WTC11 (cell line): ENCODE measurements at regions of chr9 and their contacts with region 1.

Region 1: GRCh38 chr9:97615439-97616072 is 17.6 kb downstream of the TSTD2 start:
- DNase-seq: peak; percentile 64
- ATAC-seq: peak; percentile 51; the same call in 1 of the 2 replicates
- H3K4me3 Mint-ChIP-seq: no peak overlapping the region
- H3K27ac Mint-ChIP-seq: no peak overlapping the region
- H3K4me1 Mint-ChIP-seq: no peaks in the 10 kb centered on the region
- H3K27me3 Mint-ChIP-seq: no peaks in the 10 kb centered on the region
- CTCF ChIP-seq: peak; percentile 63

Region 2: DNA sequence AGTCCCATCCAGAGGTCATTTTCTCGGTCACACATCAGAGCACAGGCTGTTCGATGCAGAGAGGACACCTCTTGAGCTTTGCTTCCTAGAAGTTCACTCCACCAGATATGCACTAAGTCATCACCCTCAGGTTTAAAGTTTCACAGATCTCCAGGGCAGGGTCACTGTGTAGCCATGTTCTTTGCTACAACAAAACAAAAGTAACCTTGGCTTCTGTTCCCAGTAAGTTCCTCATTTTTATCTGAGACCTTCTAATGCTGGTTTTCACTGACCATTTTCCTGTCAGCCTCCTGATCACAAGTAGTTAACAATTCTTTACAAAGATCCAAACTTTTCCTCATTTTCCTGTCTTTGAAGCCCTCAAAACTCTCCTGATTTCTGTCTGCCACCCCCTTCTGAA is 479.1 kb before region 1 on chr9:
- CTCF ChIA-PET with region 1: no interaction called
- POLR2A ChIA-PET with region 1: no interaction called
- DNase-seq: no peak
- ATAC-seq: no peak
- H3K4me3 Mint-ChIP-seq: no peak overlapping the region
- H3K27ac Mint-ChIP-seq: peak overlapping the region; percentile 54
- H3K4me1 Mint-ChIP-seq: peaks cover 25% of the 10 kb centered on the region
- H3K27me3 Mint-ChIP-seq: no peaks in the 10 kb centered on the region
- CTCF ChIP-seq: no peak

Region 3: GRCh38 chr9:97468658-97469448 is 146.7 kb before region 1 on chr9:
- CTCF ChIA-PET with region 1: interaction called, 42 read pairs
- POLR2A ChIA-PET with region 1: no interaction called
- DNase-seq: peak; percentile 77
- ATAC-seq: peak; percentile 100
- H3K4me3 Mint-ChIP-seq: no peak overlapping the region
- H3K27ac Mint-ChIP-seq: no peak overlapping the region
- H3K4me1 Mint-ChIP-seq: no peaks in the 10 kb centered on the region
- H3K27me3 Mint-ChIP-seq: no peaks in the 10 kb centered on the region
- CTCF ChIP-seq: peak; percentile 38; the same call in 1 of the 2 replicates

Region 4: GRCh38 chr9:97632985-97633858 is 17.7 kb after region 1 on chr9 and contains the starts of genes NCBP1 and TSTD2:
- CTCF ChIA-PET with region 1: interaction called, 18 read pairs
- POLR2A ChIA-PET with region 1: interaction called, 6 read pairs
- DNase-seq: peak; percentile 94
- ATAC-seq: peak; percentile 92
- H3K4me3 Mint-ChIP-seq: peak within 1 kb of the TSS; percentile 98
- H3K27ac Mint-ChIP-seq: peak within 1 kb of the TSS; percentile 100
- H3K4me1 Mint-ChIP-seq: peaks cover 48% of the 10 kb centered on the region
- H3K27me3 Mint-ChIP-seq: no peaks in the 10 kb centered on the region
- CTCF ChIP-seq: no peak
- total RNA-seq, gene NCBP1: 47.8 to 61.1 TPM (median 51.3 TPM) in 3 replicates
- total RNA-seq, gene TSTD2: 16.8 to 19.6 TPM (median 18.3 TPM) in 3 replicates